Right ventricle myocardium superior (tissue), 1 donor: ENCODE measurements at regions of chr13 and their contacts with region 1.

Region 1: DNA sequence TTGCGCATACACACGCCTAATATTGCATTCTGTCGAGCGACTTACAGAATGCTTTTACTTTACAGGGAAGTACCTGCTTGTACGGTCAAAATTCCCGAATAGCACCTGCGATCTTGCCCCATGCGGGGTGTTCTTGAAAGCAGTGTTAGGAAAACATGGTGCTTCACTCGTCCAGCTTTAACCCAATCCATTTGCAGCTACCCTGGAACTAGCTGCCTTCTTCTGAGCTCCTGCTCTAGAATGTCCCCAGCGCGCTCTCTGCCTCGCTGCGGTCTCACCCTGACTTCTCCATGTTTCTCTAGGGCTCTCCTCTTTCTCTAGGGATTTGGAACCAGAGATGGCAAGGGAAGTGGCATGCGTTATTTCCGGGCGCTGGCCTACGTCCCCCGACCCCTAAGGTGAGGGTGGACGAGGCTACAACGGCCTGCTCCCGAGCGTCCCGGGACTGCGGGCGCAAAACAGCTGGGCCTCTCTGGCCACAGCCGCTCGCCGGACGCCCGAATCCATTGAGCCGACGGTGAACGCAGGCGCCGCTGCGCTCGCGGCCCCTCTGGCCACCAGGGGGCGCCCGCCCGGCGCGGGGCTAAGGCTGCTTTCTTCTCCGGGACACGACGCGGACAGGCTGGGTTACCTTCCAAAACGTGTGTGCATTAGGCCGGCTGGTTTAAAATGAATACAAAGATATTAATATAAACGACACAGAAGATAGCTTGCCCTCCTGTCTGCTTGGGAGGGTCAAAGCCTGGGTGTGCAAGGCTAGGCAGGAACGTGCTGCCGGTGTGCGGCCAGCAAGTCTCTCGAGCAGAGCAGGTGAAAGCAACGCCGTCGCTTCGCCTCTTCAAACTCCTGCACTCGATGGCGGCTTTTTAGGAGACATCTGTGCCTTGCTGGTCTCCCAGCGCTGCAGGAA is 1.8 kb upstream of the SPRY2 start:
- DNase-seq: peak; percentile 94
- ATAC-seq: peak; percentile 69

Region 2: GRCh38 chr13:79775830-79776229 is 566.9 kb before region 1 on chr13:
- intact Hi-C with region 1: loop called (anchors 5 kb)
- DNase-seq: no peak
- ATAC-seq: peak; percentile 83

Region 3: GRCh38 chr13:80048802-80049201 is 293.9 kb before region 1 on chr13:
- intact Hi-C with region 1: loop called (anchors 10 kb)
- DNase-seq: peak; percentile 82
- ATAC-seq: peak; percentile 98

Region 4: DNA sequence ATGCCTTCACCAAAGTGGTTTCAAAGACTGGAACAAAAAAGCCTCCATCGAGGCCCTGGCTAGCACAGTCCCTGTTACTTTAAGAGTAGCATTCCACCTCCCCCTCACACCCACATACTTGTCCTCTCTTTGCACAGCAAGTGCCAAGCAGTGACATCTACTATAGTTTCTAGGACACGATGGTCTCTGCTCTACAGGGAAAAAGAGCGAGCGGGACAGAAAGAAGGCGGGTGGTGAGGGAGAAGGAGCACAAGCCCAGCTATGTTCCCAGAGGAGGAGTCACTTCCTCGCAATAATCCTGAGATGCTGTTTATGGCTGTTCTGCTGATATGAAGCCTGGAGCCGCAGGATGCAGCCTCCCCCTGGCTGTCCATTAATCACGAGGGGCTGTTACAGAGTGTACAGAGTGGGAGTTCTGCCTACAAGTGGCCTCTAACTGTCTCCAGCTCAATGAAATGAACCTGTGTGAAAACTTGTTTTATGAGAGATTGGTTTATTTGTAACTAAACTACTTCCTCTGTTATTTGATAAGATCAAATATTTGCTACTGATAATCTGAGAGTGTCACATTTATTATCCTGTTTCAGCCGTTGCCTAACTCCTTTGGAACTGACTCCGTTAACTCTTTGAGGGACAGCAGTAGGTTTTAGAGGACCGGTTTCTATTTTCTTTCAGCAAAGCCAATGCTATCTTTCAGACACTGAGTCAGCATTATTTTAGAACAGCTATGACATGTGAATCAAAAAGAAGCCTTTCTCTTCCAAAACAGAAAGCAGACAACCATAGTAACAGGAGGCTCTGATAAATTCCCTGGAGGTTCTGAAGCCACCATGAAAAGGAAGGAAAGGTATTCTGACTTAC is 209.8 kb before region 1 on chr13:
- intact Hi-C with region 1: loop called (anchors 2 kb)
- DNase-seq: peak; percentile 58
- ATAC-seq: peak; percentile 95

Region 5: DNA sequence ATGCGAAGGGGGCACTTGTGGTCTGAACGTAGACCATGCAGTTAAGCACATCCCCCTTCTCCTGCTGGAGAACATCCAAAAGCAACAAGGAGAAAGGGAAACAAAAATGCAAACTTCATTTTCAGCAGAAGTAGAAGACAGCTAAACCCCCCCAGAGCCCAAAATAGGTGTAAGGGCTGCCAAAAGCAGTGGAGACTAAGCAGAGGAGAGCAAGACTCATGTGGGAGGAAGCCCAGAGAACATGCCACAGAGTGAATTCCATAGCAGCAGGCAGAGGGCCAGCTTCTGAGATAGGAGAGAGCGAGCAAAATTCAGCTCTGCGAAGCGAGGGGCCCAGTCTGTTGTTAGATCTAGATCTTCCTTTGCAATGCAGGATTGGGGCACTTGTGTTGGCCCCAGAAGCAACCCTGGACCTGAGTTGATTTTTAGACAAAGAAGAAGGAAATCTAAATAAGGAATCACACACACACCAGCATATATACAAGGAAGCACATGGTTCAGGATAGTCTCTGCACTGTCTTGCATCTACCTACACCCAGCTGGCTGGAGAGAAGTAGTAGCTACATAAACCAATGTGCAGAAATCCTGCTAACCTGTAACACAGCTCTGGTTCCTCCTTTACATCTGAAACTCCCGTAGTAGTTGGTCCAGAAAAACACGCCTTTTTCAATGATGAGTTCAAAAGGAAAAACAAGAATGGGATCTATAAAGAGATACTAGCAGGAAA is 201.4 kb before region 1 on chr13:
- intact Hi-C with region 1: loop called (anchors 2 kb)
- DNase-seq: peak; percentile 71
- ATAC-seq: peak; percentile 96